Dorsolateral prefrontal cortex (tissue), 120 donors: ENCODE measurements at regions of chr11 and their contacts with region 1.

Region 1: GRCh38 chr11:124837491-124837856 is 27.8 kb upstream of the ROBO3 start:
- DNase-seq: no peak
- H3K4me3 ChIP-seq: peak overlapping the region in 10 of 59 donors; percentile 36 to 65 (median 53)
- H3K27ac ChIP-seq: peak overlapping the region in 17 of 59 donors; percentile 2 to 79 (median 60)
- H3K27me3 ChIP-seq: peaks cover 0 to 48% (median 28%) of the 10 kb centered on the region in 45 donors
- CTCF ChIP-seq: peak in 5 of 56 donors; percentile 2 to 37 (median 4)

Region 2: DNA sequence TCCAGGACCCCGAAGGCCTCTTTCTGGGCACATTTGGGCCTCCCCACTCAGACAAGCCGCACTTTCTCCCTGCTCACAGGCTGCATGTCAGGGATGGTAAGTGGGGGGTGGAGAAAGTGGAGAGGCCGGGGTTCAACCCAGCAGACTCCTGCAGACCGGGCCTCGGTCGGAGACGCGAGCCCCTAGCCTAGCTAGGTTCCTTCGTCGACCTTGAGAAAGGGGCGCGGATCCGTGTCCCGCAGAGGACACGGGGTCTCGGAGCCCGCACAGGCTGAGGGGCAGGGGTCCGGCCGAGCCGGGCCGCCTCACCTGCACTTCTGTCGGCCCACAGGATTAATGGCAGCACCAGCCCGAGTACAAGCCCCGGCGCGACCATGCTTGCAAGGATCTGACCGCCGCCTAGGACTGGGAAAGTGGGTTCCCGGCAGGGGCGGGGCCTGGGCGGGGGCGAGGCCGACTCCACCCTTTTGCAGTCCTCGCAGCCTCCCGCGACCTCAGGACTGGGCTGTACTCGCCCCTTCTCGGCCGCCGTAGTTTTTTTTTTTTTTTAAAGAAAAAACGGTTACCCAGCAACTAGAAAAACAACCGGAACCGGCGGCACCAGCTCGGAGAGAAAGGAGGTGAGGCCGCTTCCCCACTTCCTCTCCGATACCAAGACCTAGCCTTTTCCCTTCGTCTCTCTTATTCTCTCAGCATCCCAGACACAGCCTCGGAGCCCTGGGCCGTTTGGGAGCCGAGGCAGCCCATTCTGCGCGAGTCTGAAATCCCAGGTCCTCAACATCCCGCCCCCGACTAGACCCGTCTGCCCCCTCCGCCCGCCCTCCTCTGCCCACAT is 163.9 kb before region 1 on chr11 and contains the starts of genes SIAE and SPA17:
- intact Hi-C with region 1: loop called (anchors 2 to 5 kb)
- DNase-seq: peak; percentile 73 to 93 (median 88)
- H3K4me3 ChIP-seq: peak within 1 kb of the TSS; percentile 57 to 89 (median 74)
- H3K27ac ChIP-seq: peak within 1 kb of the TSS; percentile 33 to 95 (median 89)
- H3K27me3 ChIP-seq: no peaks in the 10 kb centered on the region
- CTCF ChIP-seq: peak in 35 of 56 donors; percentile 7 to 58 (median 30)
- total RNA-seq, gene SIAE: 23.8 to 62.3 (median 44.4) TPM
- total RNA-seq, gene SPA17: 2.0 to 12.4 (median 6.5) TPM

Region 3: DNA sequence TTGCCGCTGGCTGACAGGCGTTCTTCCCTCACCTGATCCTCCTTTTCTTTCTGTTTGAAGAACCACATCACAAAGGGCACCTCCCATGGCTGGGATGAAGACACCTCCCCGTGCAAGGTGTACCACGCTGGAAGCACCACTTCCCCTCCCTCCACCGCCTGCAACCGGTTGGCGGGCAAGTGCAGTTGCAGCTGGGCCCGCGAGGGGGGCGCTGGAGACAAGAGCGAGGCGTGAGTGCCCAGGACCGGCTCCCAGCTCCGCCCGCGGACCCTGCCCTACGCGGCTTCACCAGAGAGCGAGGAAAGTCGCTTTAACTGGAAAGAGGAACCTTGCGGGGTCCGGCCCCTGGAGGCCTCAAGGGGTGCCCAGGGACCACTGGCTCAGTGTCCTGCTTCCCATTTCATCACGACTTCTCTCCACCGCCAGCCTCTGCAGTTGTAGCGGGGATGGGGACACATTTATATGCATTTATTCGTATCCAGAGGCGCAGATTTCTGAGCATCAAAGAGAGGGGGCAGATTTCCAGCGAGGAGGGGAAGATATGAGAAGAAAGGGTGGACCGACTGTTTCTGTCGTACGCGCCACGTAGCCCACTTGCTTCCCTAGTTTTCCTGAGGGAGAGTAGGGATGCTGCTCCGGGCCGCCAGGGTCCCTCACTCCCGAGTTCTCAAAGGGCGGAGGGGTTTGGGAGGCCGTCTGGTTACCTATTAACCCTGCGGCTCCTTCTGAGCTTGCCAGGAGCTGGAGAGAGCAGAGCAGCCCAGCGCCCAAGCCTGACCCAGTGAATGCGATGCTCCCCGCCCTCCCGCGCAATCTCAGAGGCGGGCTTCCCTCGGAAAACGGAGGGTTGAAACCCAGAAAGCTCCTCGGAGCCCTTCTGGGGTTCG is 78.9 kb before region 1 on chr11:
- intact Hi-C with region 1: loop called (anchors 2 to 5 kb)
- DNase-seq: peak; percentile 57 to 88 (median 74)
- H3K4me3 ChIP-seq: peak overlapping the region; percentile 19 to 72 (median 53)
- H3K27ac ChIP-seq: peak overlapping the region in 45 of 59 donors; percentile 1 to 89 (median 59)
- H3K27me3 ChIP-seq: peaks cover 0 to 74% (median 28%) of the 10 kb centered on the region in 45 donors
- CTCF ChIP-seq: peak; percentile 14 to 86 (median 72)

Region 4: GRCh38 chr11:124800226-124800929 is 37.1 kb before region 1 on chr11 and contains the start of gene MSANTD2:
- intact Hi-C with region 1: loop called in 1 of 2 experiments (anchors 5 kb)
- DNase-seq: peak; percentile 70 to 93 (median 81)
- H3K4me3 ChIP-seq: peak within 1 kb of the TSS; percentile 67 to 97 (median 90)
- H3K27ac ChIP-seq: peak within 1 kb of the TSS; percentile 94 to 100 (median 99)
- H3K27me3 ChIP-seq: no peaks in the 10 kb centered on the region
- CTCF ChIP-seq: peak in 32 of 56 donors; percentile 4 to 56 (median 29)
- total RNA-seq, gene MSANTD2: 9.8 to 28.2 (median 17.7) TPM

Region 5: GRCh38 chr11:124875943-124876817 is 38.7 kb after region 1 on chr11:
- intact Hi-C with region 1: loop called in 1 of 2 experiments (anchors 5 kb)
- DNase-seq: peak; percentile 67 to 90 (median 82)
- H3K4me3 ChIP-seq: peak overlapping the region; percentile 47 to 96 (median 71)
- H3K27ac ChIP-seq: peak overlapping the region; percentile 57 to 97 (median 87)
- H3K27me3 ChIP-seq: peaks cover 0 to 7% (median 0%) of the 10 kb centered on the region in 45 donors
- CTCF ChIP-seq: peak in 55 of 56 donors; percentile 58 to 95 (median 82)